ENCODE measurements at regions of chr1 and their contacts with region 1.

Region 1: DNA sequence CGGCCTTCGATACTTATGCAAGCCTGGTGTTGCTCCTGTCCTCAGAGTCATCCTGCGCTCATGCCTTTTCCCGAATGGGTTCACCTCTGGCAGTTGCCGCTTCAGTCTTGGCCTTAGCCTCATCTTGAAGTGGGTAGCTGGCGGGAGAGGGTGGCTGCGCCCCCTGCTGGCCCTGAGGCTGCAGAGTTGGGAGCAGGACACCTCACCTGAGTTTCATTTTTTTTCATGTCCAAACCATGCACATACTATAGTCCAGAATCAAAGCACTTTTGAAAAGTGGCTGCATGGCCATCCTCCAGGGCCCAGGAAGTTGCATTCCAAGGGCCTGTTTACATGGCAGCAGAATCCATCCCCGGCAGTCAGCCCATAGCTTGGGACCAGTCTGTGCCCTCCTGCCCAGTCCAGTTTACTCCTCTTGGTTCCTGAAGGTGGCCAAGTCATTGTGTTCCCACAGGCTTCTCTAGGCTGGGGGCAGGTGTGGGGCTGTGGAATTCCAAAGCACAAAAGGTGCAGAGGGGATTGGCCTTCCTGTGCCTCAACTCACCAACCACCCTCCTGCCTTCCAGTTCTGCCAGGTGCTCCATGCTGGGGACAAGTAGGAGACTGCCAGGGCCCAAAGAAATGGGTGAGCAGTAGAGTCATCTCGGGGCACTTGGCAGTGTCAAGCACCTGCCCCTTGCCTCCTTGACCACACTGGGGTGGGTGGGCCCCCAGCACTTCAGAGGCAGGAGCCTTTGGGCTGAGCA is 44.0 kb downstream of the YARS1 start:
- DNase-seq: peak; percentile 88
- ATAC-seq: peak; percentile 84
- H3K4me3 Mint-ChIP-seq: no peak overlapping the region
- H3K27ac Mint-ChIP-seq: no peak overlapping the region
- H3K4me1 Mint-ChIP-seq: peaks cover 16% of the 10 kb centered on the region
- H3K27me3 Mint-ChIP-seq: no peaks in the 10 kb centered on the region

Region 2: DNA sequence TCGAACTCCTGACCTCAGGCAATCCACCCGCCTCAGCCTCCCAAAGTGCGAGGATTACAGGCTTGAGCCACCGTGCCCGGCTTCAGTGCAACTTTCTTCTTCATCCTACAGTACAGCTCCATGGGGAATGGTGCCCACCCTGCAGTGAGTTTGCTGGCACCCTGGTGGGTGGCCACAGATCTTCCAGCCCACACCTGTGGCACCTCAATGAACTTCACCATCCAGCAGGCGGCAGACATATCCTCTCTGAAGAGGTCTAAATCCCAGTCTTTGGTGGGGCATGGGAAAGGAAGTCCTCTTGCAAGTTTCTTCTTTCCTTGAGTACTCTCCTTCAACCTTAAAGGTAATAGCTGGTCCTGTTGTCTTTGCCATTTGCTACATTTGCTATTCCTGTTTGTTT is 252.0 kb before region 1 on chr1:
- CTCF ChIA-PET with region 1: interaction called, 18 read pairs
- POLR2A ChIA-PET with region 1: no interaction called
- intact Hi-C with region 1: loop called (anchors 1 kb)
- DNase-seq: peak; percentile 7
- ATAC-seq: no peak
- H3K4me3 Mint-ChIP-seq: peak overlapping the region; percentile 64
- H3K27ac Mint-ChIP-seq: no peak overlapping the region
- H3K4me1 Mint-ChIP-seq: peaks cover 6% of the 10 kb centered on the region
- H3K27me3 Mint-ChIP-seq: peaks cover 6% of the 10 kb centered on the region

Region 3: GRCh38 chr1:32702599-32703478 is 70.4 kb before region 1 on chr1 and contains the start of gene SYNC:
- CTCF ChIA-PET with region 1: interaction called, 25 read pairs
- POLR2A ChIA-PET with region 1: no interaction called
- intact Hi-C with region 1: no loop called
- DNase-seq: peak; percentile 40
- ATAC-seq: peak; percentile 55
- H3K4me3 Mint-ChIP-seq: peak within 1 kb of the TSS; percentile 15
- H3K27ac Mint-ChIP-seq: no peak within 1 kb of the TSS
- H3K4me1 Mint-ChIP-seq: peaks cover 9% of the 10 kb centered on the region
- H3K27me3 Mint-ChIP-seq: peaks cover 27% of the 10 kb centered on the region
- total RNA-seq, gene SYNC: not detected

Region 4: GRCh38 chr1:32729254-32730046 is 43.7 kb before region 1 on chr1:
- CTCF ChIA-PET with region 1: interaction called, 12 read pairs
- POLR2A ChIA-PET with region 1: no interaction called
- intact Hi-C with region 1: no loop called
- DNase-seq: no peak
- ATAC-seq: no peak
- H3K4me3 Mint-ChIP-seq: no peak overlapping the region
- H3K27ac Mint-ChIP-seq: no peak overlapping the region
- H3K4me1 Mint-ChIP-seq: peaks cover 14% of the 10 kb centered on the region
- H3K27me3 Mint-ChIP-seq: no peaks in the 10 kb centered on the region

Region 5: DNA sequence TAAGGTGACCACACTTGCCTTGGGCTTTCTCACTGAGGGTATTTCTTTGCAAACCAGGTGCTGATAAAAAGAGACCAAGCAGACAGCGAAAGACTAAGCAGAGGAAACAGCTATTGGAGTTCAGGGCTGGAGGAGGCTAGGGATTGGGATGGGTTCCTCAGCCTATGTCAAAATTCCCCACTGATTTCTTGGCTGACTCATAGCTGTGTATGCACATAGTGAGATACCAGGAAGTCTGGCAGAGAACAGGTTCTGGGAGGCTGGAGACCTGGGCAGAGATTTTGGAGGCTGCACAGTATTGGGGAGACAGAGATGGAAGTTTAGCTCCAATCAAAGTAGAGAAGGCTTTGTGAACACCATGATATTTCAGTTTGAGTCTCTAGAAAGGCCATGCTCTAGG is 18.7 kb after region 1 on chr1:
- CTCF ChIA-PET with region 1: interaction called, 11 read pairs
- POLR2A ChIA-PET with region 1: no interaction called
- intact Hi-C with region 1: no loop called
- DNase-seq: no peak
- ATAC-seq: no peak
- H3K4me3 Mint-ChIP-seq: no peak overlapping the region
- H3K27ac Mint-ChIP-seq: no peak overlapping the region
- H3K4me1 Mint-ChIP-seq: peaks cover 2% of the 10 kb centered on the region
- H3K27me3 Mint-ChIP-seq: no peaks in the 10 kb centered on the region

Measured in activated CD4-positive, alpha-beta T cell treated with anti-CD3 and anti-CD28 coated beads for 36 hours (primary cell).